Dendritic cell treated with granulocyte-macrophage colony-stimulating factor and Interleukin-4, amounts not matched to agents 40 ng/mL and 50 ng/mL, for 4 days (primary cell): ENCODE measurements at regions of chr6 and their contacts with region 1.

Region 1: DNA sequence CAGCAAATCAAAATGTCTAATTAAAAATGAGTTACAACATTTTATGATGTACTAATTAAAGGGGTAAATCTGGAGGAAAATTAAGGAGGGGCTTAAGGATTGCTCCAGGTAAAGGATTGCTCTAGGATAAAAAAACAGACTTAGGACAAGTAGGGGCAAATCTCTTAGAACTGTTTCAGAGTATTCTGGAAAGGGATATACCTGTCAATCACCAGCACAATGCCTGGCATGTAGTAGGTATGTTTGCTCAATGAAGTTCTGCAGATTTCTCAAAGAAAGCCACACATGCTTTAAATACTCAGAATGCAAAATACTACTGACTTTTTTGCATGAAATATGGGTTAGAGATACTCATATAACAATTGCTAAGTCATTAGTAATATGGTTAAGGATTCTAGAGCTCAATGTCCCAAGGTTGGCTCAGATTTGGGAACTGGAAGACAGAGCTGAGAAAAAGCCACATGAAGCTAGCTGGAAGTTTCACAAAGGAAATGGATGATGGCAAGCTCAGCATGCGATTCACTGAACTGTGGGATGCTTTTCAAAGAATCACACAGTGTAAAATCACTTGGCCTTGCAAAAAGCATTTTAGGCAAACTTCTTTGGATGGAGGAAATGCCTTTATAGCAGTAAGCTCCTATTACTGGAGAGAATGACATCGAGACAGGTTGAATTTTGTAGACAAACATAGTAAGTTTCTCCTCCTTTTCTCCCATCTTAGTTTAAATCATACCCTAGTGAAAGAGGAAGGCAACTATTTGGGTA is 72.8 kb downstream of the MAP3K5 start:
- H3K4me3 Mint-ChIP-seq: peak overlapping the region; percentile 76
- H3K27ac Mint-ChIP-seq: peak overlapping the region; percentile 94
- H3K4me1 Mint-ChIP-seq: peaks cover 64% of the 10 kb centered on the region
- H3K27me3 Mint-ChIP-seq: no peaks in the 10 kb centered on the region

Region 2: GRCh38 chr6:136751522-136751956 is 32.1 kb after region 1 on chr6:
- intact Hi-C with region 1: loop called (anchors 5 kb)
- H3K4me3 Mint-ChIP-seq: peak overlapping the region; percentile 33
- H3K27ac Mint-ChIP-seq: peak overlapping the region; percentile 79
- H3K4me1 Mint-ChIP-seq: peaks cover 64% of the 10 kb centered on the region
- H3K27me3 Mint-ChIP-seq: no peaks in the 10 kb centered on the region

Region 3: DNA sequence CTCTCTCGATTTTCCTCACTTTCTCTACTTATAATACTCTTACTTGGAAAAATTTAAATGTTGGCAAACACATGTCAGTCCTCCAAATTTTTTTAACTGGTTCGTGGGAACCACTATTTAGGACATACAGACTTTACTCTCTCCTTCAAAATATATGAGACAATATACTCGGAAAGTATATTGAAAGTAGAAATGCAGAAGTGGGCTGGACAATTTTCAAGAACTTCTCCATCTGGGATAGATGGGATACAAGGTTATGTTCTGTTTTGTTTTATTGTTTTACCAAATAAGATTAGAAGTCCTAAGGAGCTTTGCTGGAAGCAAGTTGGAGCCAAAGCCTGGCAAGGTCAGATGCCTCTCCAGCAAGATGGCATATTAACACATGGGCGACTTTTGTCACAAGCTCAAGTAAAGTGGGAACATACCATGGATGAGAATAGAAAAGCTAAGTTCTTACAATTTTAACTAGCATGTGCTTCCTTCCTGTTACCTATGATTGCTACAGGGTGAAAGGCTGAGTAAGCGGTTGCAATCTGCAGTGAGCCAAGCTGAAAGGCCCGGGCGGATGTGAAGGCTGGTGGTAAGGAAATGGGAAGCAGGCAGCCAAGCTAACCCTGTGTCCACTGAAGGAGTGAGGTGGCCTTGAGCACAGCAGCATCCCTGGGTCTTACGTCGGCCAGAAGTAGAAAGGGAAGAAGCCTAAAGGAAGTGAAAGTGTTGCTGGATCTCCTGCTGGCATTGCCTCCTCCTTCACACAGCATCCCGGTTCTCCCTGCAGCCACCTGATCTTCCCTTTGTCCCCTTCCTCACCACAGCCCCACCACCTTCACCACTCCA is 65.7 kb after region 1 on chr6:
- intact Hi-C with region 1: loop called (anchors 5 kb)
- H3K4me3 Mint-ChIP-seq: peak overlapping the region; percentile 85
- H3K27ac Mint-ChIP-seq: peak overlapping the region; percentile 85
- H3K4me1 Mint-ChIP-seq: peaks cover 74% of the 10 kb centered on the region
- H3K27me3 Mint-ChIP-seq: no peaks in the 10 kb centered on the region